HAP-1 (cell line): ENCODE measurements at regions of chr10 and their contacts with region 1.

Region 1: DNA sequence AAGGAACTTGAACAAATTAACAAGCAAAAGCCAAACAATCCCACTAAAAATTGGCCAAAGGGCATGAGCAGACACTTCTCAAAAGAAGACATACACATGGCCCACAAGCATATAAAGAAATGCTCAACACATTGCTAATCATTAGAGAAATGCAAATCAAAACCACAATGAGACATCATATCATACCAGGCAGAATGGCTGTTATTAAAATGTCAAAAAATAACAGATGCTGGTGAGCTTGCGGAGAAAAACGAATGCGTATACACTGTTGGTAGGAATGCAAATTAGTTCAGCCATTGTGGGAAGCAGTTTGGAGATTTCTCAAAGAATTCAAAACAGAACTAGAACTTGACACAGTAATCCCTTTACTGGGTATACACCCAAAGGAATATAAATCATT is 311.7 kb upstream of the HPS1 start:
- DNase-seq: no peak
- H3K4me3 ChIP-seq: no peak overlapping the region
- H3K4me1 ChIP-seq: no peaks in the 10 kb centered on the region
- H3K27me3 ChIP-seq: no peaks in the 10 kb centered on the region

Region 2: DNA sequence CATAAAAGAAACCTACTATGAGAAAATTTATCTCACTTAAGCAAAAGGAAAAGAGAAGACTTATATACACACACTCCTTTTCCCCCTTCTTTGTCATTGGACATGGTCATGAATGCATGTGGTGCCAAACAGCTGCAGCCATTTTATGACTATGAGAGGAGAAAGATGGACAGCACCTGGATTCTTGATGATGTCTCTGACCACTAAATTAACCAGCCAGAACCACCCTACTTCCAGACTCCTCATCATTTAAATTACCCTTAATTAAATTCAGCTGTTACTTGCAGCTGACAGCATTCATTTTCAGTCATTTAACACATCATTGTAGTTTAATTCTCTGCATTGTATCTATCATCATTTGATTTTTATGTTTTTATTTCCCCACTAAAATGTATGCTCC is 67.3 kb after region 1 on chr10:
- in situ Hi-C with region 1: no loop called
- DNase-seq: no peak
- H3K4me3 ChIP-seq: no peak overlapping the region
- H3K4me1 ChIP-seq: no peaks in the 10 kb centered on the region
- H3K27me3 ChIP-seq: no peaks in the 10 kb centered on the region

Region 3: GRCh38 chr10:99042051-99042771 is 283.7 kb after region 1 on chr10:
- in situ Hi-C with region 1: loop called (anchors 25 kb)
- DNase-seq: no peak
- H3K4me3 ChIP-seq: no peak overlapping the region
- H3K4me1 ChIP-seq: no peaks in the 10 kb centered on the region
- H3K27me3 ChIP-seq: 0 out of 2 replicates have a peak, but pooled peaks cover 4% of the 10 kb centered on the region